PC-9 (cell line): ENCODE measurements at regions of chr10 and their contacts with region 1.

Region 1: GRCh38 chr10:34906067-34906965 is 91.2 kb upstream of the PARD3 start:
- DNase-seq: peak in 1 of 2 experiments; percentile 63
- H3K4me3 ChIP-seq: no peak overlapping the region
- H3K27ac ChIP-seq: no peak overlapping the region
- H3K4me1 ChIP-seq: no peaks in the 10 kb centered on the region
- H3K27me3 ChIP-seq: no peaks in the 10 kb centered on the region
- CTCF ChIP-seq: no peak

Region 2: DNA sequence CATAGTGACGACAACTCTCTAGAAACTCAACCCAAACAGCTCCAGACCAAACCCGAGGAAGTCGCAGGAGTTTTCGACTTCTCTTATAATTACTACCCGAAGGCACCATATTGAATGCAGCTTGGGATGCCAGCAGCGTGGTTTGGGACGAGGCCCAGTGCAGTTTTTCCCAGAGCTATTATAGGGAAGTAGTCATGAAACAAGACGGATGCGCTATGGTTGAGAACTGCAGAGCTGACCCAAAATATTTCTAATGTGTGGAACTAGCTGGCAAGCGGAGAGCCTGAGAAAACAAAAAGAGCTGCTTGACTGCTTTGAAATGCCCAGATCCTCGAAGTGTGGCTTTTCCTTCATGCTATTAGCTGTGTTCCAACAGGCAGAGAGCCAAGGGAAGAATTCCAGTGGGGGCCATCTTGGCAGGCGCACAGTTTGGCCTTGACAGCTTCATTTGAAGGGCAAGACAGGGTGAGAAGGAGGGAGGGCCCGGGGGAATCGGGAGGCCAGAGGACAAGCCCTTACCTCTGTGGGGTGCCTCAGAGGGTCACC is 61.1 kb after region 1 on chr10:
- CTCF ChIA-PET with region 1: interaction called, 4 read pairs
- POLR2A ChIA-PET with region 1: no interaction called
- intact Hi-C with region 1: loop called (anchors 5 kb)
- DNase-seq: no peak
- H3K4me3 ChIP-seq: no peak overlapping the region
- H3K27ac ChIP-seq: no peak overlapping the region
- H3K4me1 ChIP-seq: peaks cover 11% of the 10 kb centered on the region
- H3K27me3 ChIP-seq: no peaks in the 10 kb centered on the region
- CTCF ChIP-seq: no peak